ENCODE measurements at regions of chr17 and their contacts with region 1.

Region 1: DNA sequence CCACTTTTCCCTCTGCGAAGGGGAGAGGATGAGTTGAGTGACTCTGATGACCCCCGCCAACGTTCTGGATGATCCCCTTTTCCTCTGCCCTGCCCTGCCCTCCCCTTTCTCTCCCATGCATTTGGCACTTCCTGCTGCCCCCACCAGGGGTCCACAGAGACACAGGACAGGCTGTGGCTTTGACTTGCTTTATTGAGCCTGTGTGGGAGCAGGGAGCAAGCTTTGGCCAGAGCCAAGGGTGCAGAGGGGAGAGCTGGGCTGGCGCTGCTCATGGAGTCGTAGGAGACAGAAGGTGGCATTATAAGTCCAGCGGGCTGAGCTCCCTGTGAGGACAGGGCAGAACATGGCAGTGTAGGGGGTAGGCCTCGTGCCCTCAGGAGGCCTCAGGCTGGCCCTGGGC is 1.6 kb downstream of the PPY start:
- DNase-seq: peak; percentile 16
- H3K4me3 ChIP-seq: no peak overlapping the region
- H3K27ac ChIP-seq: no peak overlapping the region
- H3K4me1 ChIP-seq: no peaks in the 10 kb centered on the region
- H3K27me3 ChIP-seq: no peaks in the 10 kb centered on the region
- CTCF ChIP-seq: peak; percentile 41 to 57
- POLR2A ChIP-seq: no peak

Region 2: GRCh38 chr17:43530278-43531081 is 410.1 kb before region 1 on chr17:
- CTCF ChIA-PET with region 1: no interaction called
- POLR2A ChIA-PET with region 1: no interaction called
- dilution Hi-C with region 1: no loop called
- intact Hi-C with region 1: no loop called
- DNase-seq: peak; percentile 92
- H3K4me3 ChIP-seq: peak overlapping the region in 1 of 3 experiments; percentile 1
- H3K27ac ChIP-seq: peak overlapping the region; percentile 83
- H3K4me1 ChIP-seq: peaks cover 23% of the 10 kb centered on the region
- H3K27me3 ChIP-seq: no peaks in the 10 kb centered on the region
- CTCF ChIP-seq: no peak
- POLR2A ChIP-seq: peak; percentile 46

Region 3: GRCh38 chr17:43661699-43662412 is 278.8 kb before region 1 on chr17 and contains the start of gene MEOX1:
- CTCF ChIA-PET with region 1: no interaction called
- POLR2A ChIA-PET with region 1: no interaction called
- dilution Hi-C with region 1: no loop called
- intact Hi-C with region 1: no loop called
- DNase-seq: no peak
- H3K4me3 ChIP-seq: no peak within 1 kb of the TSS
- H3K27ac ChIP-seq: no peak within 1 kb of the TSS
- H3K4me1 ChIP-seq: no peaks in the 10 kb centered on the region
- H3K27me3 ChIP-seq: no peaks in the 10 kb centered on the region
- CTCF ChIP-seq: no peak
- POLR2A ChIP-seq: no peak
- total RNA-seq, gene MEOX1: 0.14 TPM in 1 of 2 replicates, not detected in the other

Region 4: DNA sequence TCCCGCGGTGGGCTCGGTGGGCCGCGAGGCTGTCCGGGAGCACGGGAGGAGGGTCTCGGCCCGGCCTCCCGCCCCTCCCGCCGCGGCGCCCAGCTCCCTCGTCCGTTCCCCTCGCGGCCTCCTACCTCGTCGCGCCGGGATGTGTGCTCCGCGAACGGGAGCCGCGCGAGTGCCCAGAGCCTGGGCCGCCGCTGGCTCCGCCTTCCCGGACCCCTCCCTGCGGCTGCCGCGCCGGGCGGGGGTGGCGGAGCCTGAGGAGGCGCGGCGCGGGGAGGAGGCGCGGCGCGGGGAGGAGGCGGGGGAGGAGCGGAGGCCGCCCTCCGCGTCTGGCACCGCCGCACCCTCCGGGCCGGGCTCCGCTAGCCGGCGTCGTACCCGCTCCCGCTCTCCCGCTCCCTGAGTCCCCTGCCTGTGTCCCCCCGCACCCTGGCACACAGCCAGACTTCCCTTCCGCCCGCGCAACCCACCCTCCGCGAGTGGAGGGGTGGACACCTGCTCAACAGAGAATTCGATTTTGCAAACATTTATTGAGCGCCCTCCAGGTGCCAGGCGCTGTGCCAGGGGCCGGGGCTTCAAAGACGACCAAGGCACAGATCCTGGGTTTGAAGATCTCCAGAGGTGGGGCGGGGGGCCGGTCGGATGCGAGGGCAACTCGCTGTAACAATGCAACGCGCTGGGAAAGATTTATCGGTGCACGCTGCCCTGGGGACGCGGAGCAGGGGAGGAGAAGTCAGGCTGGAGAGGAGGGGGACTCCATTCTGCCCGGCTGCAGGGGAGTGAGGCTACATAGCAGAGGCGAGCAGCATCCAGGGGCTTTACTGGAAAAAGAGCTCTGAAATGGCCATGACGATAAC is 107.4 kb before region 1 on chr17 and contains the start of gene MPP3:
- CTCF ChIA-PET with region 1: no interaction called
- POLR2A ChIA-PET with region 1: no interaction called
- dilution Hi-C with region 1: no loop called
- intact Hi-C with region 1: no loop called
- DNase-seq: peak; percentile 66
- H3K4me3 ChIP-seq: peak within 1 kb of the TSS; percentile 33 to 85 (median 47)
- H3K27ac ChIP-seq: no peak within 1 kb of the TSS
- H3K4me1 ChIP-seq: peaks cover 2% of the 10 kb centered on the region
- H3K27me3 ChIP-seq: no peaks in the 10 kb centered on the region
- CTCF ChIP-seq: no peak
- POLR2A ChIP-seq: peak; percentile 69
- total RNA-seq, gene MPP3: 10.8 and 11.3 TPM in 2 replicates

Region 5: DNA sequence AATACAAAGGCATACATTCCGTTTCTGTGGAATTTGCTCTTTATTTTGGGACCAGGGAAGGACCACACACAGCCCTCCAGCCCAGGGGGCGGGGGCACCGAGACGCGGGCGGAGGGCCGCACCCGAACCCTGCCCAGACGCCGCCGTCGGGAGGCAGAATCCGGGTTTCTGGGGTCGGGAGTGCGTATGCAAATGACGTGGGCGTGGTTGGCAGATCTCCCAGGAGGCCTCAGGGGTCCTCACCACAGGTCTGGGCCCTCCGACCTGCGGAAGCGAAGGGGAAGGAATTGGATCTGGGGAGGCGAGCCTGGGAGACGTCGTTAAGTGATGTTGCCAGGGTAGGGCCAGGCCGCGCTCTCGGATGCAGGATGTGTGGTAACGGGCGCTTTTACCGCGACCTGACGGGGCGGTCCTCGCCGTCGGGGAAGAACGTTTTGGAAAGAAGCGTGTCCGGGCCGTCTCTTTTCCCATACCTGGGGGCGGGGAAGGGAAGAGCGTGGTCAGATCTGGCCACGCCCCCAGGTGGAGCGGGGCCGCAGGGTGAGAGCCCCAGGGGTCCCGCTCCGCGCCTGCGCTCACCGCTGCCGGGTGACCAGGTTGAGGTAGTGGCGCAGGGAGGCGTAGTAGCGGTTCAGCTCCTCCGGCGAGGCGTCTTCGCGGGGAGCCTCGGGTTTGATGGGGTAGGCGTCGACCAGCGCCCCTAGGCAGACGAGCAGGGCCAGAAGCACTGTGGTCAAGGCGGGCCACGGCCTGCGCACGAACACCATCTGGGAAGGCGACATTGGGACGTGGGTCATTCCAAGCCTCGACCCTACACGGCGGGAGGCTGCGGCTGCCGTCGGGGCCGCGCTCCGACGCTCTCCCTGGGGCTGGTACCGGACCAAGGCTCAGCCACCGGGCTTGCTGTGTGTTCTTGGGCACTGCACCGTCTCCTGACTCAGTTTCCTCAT is 12.4 kb after region 1 on chr17:
- CTCF ChIA-PET with region 1: interaction called, 42 read pairs
- POLR2A ChIA-PET with region 1: no interaction called
- dilution Hi-C with region 1: no loop called
- intact Hi-C with region 1: no loop called
- DNase-seq: no peak
- H3K4me3 ChIP-seq: no peak overlapping the region
- H3K27ac ChIP-seq: no peak overlapping the region
- H3K4me1 ChIP-seq: peaks cover 2% of the 10 kb centered on the region
- H3K27me3 ChIP-seq: peaks cover 40 to 44% of the 10 kb centered on the region in 2 experiments
- CTCF ChIP-seq: no peak
- POLR2A ChIP-seq: no peak

Region 6: GRCh38 chr17:43974382-43975266 is 34.0 kb after region 1 on chr17:
- CTCF ChIA-PET with region 1: interaction called, 11 read pairs
- POLR2A ChIA-PET with region 1: no interaction called
- dilution Hi-C with region 1: no loop called
- intact Hi-C with region 1: no loop called
- DNase-seq: no peak
- H3K4me3 ChIP-seq: no peak overlapping the region
- H3K27ac ChIP-seq: no peak overlapping the region
- H3K4me1 ChIP-seq: no peaks in the 10 kb centered on the region
- H3K27me3 ChIP-seq: peaks cover 13% of the 10 kb centered on the region in 2 experiments
- CTCF ChIP-seq: no peak
- POLR2A ChIP-seq: no peak

Region 7: DNA sequence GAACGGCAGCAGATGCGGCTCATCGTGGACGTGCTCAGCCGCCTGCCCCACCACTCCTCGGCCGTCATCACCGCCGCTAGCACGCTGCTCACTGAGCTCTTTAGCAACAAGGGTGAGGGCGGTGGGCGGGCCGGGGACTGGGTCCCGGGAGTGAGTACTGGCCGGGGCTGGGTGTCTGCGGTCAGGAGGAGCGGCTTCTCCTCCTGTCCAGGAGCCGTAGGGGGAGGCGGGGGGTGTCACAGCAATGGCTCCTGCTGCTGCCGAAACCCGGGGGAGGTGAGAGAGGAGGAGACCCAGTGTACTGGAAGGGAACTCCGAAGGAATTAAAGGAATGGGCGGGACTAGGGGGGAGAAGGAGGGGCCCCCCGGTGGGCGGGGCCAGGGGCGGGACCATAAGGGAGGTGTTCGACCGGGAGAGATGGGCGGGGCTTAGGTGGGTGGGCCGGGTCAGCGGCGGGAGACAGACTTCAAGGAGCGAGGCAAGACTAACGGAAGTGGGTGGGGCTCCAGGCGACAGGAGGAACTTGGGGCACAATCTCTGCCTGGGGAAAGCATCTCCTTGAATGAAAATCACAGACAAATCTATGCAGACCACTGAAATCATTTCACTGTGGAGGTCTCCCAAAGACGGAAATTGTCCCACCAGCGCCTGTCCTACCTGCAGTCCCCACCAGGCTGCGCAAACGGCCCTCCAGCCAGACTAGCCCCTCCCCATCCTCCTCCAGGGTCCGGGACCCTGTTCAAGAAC is 66.1 kb after region 1 on chr17:
- CTCF ChIA-PET with region 1: interaction called, 15 read pairs
- POLR2A ChIA-PET with region 1: no interaction called
- dilution Hi-C with region 1: no loop called
- intact Hi-C with region 1: no loop called
- DNase-seq: peak; percentile 93
- H3K4me3 ChIP-seq: peak overlapping the region in 2 of 3 experiments; percentile 43 to 56
- H3K27ac ChIP-seq: no peak overlapping the region
- H3K4me1 ChIP-seq: peaks cover 36% of the 10 kb centered on the region
- H3K27me3 ChIP-seq: no peaks in the 10 kb centered on the region
- CTCF ChIP-seq: peak; percentile 57 to 76
- POLR2A ChIP-seq: no peak

Region 8: DNA sequence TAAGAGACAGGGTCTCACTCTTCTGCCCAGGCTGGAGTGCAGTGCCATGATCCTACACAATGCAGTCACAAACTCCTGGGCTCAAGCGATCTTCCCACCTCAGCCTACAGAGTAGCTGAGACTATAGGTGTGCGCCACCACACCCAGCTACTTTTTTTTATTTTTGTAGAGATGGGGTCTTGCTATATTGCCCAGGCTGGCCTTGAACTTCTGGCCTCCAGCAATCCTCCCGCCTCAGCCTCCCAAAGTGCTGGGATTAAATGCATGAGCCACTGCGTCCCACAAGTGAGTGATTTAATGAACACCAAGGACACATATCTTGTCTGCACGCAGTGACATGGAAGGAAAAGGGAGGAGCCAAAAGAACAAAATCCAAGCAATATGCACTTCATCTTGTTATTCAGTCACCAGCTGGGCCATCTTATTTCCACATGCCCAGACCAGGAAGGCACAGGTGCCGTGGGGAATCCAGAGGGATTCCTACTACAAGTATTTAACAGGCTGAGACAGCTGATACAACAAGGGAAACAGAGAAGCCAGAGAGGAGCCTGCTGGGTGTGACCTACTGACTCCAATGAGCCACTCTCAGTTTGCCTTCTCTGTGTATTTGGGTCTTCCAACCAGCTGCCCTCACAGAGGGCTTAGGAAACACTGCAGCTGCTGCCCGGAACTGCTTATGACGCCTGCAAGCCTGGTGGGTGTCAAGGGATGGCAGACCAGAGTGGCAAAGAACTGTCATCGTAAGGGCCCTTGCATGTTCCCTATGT is 108.8 kb after region 1 on chr17:
- CTCF ChIA-PET with region 1: interaction called, 13 read pairs
- POLR2A ChIA-PET with region 1: no interaction called
- dilution Hi-C with region 1: no loop called
- intact Hi-C with region 1: no loop called
- DNase-seq: no peak
- H3K4me3 ChIP-seq: no peak overlapping the region
- H3K27ac ChIP-seq: no peak overlapping the region
- H3K4me1 ChIP-seq: peaks cover 4% of the 10 kb centered on the region
- H3K27me3 ChIP-seq: no peaks in the 10 kb centered on the region
- CTCF ChIP-seq: no peak
- POLR2A ChIP-seq: no peak

Region 9: DNA sequence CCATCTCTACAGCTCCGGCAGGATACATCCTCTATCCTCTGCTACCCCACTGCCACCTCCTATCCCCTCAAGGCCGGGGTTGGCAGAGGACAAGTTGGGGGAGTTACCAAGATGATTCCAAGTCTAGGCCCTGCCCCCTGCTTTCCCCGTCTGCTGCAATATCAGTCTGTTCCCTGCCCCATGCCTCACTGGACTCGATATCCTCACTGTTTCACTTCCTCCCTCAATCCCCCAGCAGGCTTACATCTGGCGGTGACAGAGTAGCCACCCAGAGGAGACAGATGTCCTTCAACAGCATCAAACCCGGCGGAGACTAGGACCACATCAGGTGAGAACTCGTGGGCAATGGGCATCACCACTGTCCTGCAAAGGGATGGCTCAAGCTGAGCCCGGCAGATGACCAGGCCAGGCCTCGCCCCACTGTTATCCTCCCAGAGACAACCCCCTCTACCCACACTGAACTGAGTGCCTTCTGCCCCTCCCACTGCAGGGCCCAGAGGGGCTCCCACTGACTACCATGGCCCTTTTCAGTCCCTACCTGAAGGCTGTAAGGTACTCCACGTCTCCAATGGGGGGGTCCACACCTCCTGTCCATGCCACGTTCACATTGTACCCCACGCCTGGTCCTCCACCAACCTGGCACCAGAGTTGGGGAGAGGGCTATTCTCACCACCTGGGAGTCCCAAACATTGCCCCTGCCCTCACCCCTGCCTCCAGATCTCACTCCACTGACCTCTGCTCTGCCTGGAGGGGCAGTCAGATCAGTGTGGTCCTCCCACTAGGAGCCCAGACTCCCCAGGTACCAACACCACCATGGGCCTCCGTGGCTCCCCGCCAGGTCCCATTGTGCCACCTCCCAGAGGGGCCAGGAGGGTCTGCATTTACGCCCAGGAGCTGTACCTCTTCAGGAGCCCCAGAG is 139.5 kb after region 1 on chr17:
- CTCF ChIA-PET with region 1: no interaction called
- POLR2A ChIA-PET with region 1: no interaction called
- dilution Hi-C with region 1: no loop called
- intact Hi-C with region 1: no loop called
- DNase-seq: no peak
- H3K4me3 ChIP-seq: no peak overlapping the region
- H3K27ac ChIP-seq: no peak overlapping the region
- H3K4me1 ChIP-seq: no peaks in the 10 kb centered on the region
- H3K27me3 ChIP-seq: no peaks in the 10 kb centered on the region
- CTCF ChIP-seq: no peak
- POLR2A ChIP-seq: no peak

Measured in endothelial cell of umbilical vein (primary cell).